ENCODE measurements at regions of chr17 and their contacts with region 1.

Region 1: GRCh38 chr17:57255776-57256681 is at the start of gene MSI2:
- DNase-seq: peak; percentile 75 to 97
- H3K4me3 ChIP-seq: peak within 1 kb of the TSS; percentile 92 to 93
- H3K27ac ChIP-seq: peak within 1 kb of the TSS; percentile 97 to 99
- H3K4me1 ChIP-seq: peaks cover 5% of the 10 kb centered on the region in 2 donors
- H3K27me3 ChIP-seq: no peaks in the 10 kb centered on the region
- CTCF ChIP-seq: no peak
- total RNA-seq, gene MSI2: 11.7 TPM

Region 2: DNA sequence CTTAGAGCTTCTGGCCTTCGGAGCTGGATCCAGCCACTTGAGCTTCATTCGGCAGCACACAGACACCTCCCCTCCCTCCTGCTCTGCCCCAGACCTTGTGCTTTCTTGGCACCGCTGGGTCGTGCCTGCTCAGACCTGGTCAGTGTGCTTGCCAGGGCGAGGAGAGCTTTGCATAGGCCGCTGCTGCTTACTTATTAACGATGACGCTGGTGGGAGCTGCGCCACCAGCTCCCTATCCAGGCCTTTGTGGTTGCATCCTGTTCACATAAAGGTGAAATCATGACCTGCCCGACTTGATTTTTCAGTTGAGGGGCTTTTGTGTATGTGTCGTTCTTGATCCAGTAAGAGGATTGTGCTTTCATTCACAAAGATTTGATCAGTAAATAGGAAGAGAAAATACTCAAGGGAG is 101.4 kb after region 1 on chr17:
- intact Hi-C with region 1: loop called (anchors 2 kb)
- DNase-seq: peak; percentile 48 to 76
- H3K4me3 ChIP-seq: peak overlapping the region in 1 of 2 donors; percentile 46
- H3K27ac ChIP-seq: peak overlapping the region; percentile 77 to 79
- H3K4me1 ChIP-seq: peaks cover 0 to 9% of the 10 kb centered on the region in 2 donors
- H3K27me3 ChIP-seq: no peaks in the 10 kb centered on the region
- CTCF ChIP-seq: no peak

Region 3: DNA sequence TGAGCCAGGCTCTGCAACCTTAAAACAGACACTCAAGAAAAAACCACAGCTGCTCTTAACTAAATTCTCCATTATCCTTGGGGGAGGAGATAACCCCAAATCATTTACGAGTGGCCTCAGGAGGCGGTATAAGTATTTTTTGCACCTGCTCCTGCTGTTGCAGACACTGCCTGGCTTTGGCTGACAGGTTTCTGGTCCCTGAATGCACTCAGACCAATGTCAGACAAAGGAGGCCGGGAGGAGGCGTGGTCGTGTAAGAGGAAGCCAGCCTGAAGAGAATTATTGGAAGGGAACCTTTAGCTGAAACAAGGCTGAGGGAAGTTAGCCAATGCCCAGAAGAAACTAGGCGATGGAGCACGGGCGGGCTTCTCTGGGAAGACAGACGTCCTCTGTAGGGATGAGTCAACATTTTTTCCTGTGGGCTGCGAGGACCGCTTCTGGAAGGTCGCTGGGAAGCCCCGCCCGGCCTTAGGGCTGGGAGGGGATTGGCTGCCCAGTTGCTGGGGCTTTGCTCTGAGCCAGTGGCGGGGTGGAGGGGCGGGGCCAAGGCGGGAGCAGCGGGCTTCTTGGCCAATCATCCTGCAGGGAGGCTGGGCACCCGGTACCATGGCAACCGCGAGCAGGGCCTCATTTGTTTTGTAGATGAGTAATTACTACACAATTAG is 406.7 kb after region 1 on chr17:
- intact Hi-C with region 1: loop called (anchors 1 kb)
- DNase-seq: peak; percentile 90 to 98
- H3K4me3 ChIP-seq: peak overlapping the region; percentile 44 to 50
- H3K27ac ChIP-seq: peak overlapping the region; percentile 68 to 73
- H3K4me1 ChIP-seq: peaks cover 0 to 7% of the 10 kb centered on the region in 2 donors
- H3K27me3 ChIP-seq: no peaks in the 10 kb centered on the region
- CTCF ChIP-seq: peak in 1 of 3 experiments; percentile 11

Region 4: DNA sequence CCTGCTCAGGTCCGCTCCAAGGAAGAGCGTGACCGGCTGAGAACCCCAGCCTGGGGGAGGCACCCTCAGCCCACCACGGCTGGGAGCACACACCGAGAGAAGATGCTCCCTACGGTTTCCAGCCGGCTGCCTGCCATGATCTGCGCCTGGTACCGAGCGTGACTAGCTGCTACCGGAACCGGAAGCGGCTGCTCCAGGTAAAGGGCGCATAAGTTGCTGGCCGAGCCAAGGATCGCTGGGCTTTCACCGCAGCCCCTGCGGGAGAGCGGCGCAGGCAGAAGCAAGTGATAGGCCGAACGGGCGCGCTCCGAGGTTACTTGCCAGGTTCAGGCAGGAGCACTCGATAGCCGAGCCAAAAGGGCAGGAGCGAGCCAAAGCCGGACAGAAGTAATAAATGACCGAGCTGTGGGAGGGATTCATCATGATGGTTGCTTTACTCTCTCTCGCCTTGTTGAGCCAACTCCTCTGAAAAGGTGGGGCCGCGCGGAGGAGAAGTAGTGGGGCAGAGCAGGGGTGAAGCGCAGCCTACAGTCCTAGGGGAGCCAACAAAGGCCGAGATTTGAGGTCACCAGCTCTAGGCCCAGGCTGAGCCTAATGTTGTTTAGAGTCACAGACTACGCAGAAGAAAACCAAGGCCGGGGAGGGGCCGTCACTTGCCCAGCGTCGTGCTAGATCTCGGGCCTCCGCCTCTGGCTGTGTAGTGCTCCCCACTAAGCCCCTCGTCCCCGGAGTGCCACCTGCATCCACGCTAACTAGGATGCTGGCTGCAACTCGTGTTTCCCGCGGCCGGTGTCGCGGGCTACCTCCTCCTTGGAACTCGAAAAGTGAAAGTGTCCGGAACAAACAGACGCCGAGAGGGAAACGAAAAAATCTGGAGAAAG is 594.1 kb after region 1 on chr17 and contains the start of gene MRPS23:
- intact Hi-C with region 1: loop called (anchors 5 kb)
- DNase-seq: peak; percentile 88 to 99
- H3K4me3 ChIP-seq: peak within 1 kb of the TSS; percentile 67 to 97
- H3K27ac ChIP-seq: peak within 1 kb of the TSS; percentile 88 to 96
- H3K4me1 ChIP-seq: peaks cover 15 to 41% of the 10 kb centered on the region in 2 donors
- H3K27me3 ChIP-seq: no peaks in the 10 kb centered on the region
- CTCF ChIP-seq: no peak
- total RNA-seq, gene MRPS23: 2.0 TPM

Region 5: GRCh38 chr17:58082870-58083490 is 827.0 kb after region 1 on chr17 and contains the start of gene DYNLL2:
- intact Hi-C with region 1: loop called (anchors 5 kb)
- DNase-seq: peak; percentile 65 to 96
- H3K4me3 ChIP-seq: peak within 1 kb of the TSS; percentile 66 to 76
- H3K27ac ChIP-seq: peak within 1 kb of the TSS; percentile 90 to 92
- H3K4me1 ChIP-seq: peaks cover 6 to 27% of the 10 kb centered on the region in 2 donors
- H3K27me3 ChIP-seq: no peaks in the 10 kb centered on the region
- CTCF ChIP-seq: no peak
- total RNA-seq, gene DYNLL2: 15.3 TPM

Measured in ascending aorta (tissue), 2 donors.